ENCODE measurements at regions of chr6 and their contacts with region 1.

Region 1: GRCh38 chr6:158290659-158291058 is 21.6 kb upstream of the TULP4 start:
- DNase-seq: peak; percentile 48 to 79
- ATAC-seq: peak; percentile 96 to 99 (median 99)
- H3K4me3 ChIP-seq: peak overlapping the region; percentile 9
- H3K4me3 Mint-ChIP-seq: peak overlapping the region; percentile 97
- H3K27ac ChIP-seq: peak overlapping the region; percentile 83
- H3K27ac Mint-ChIP-seq: peak overlapping the region; percentile 93 to 99
- H3K4me1 ChIP-seq: peaks cover 17% of the 10 kb centered on the region
- H3K4me1 Mint-ChIP-seq: peaks cover 43 to 53% of the 10 kb centered on the region in 2 donors
- H3K27me3 ChIP-seq: no peaks in the 10 kb centered on the region
- H3K27me3 Mint-ChIP-seq: no peaks in the 10 kb centered on the region
- CTCF ChIP-seq: no peak

Region 2: GRCh38 chr6:158231551-158232315 is 58.9 kb before region 1 on chr6:
- intact Hi-C with region 1: loop called (anchors 2 kb)
- DNase-seq: peak; percentile 74 to 84
- ATAC-seq: peak; percentile 76 to 88 (median 86)
- H3K4me3 ChIP-seq: peak overlapping the region; percentile 58
- H3K4me3 Mint-ChIP-seq: peak overlapping the region; percentile 90
- H3K27ac ChIP-seq: peak overlapping the region; percentile 70
- H3K27ac Mint-ChIP-seq: peak overlapping the region; percentile 85 to 87
- H3K4me1 ChIP-seq: peaks cover 13% of the 10 kb centered on the region
- H3K4me1 Mint-ChIP-seq: peaks cover 23 to 30% of the 10 kb centered on the region in 2 donors
- H3K27me3 ChIP-seq: no peaks in the 10 kb centered on the region
- H3K27me3 Mint-ChIP-seq: no peaks in the 10 kb centered on the region
- CTCF ChIP-seq: no peak

Region 3: GRCh38 chr6:158270389-158271127 is 20.1 kb before region 1 on chr6:
- intact Hi-C with region 1: loop called (anchors 2 kb)
- DNase-seq: no peak
- ATAC-seq: no peak
- H3K4me3 ChIP-seq: no peak overlapping the region
- H3K4me3 Mint-ChIP-seq: no peak overlapping the region
- H3K27ac ChIP-seq: peak overlapping the region; percentile 72
- H3K27ac Mint-ChIP-seq: peak overlapping the region; percentile 52 to 78
- H3K4me1 ChIP-seq: peaks cover 16% of the 10 kb centered on the region
- H3K4me1 Mint-ChIP-seq: peaks cover 9 to 30% of the 10 kb centered on the region in 2 donors
- H3K27me3 ChIP-seq: no peaks in the 10 kb centered on the region
- H3K27me3 Mint-ChIP-seq: no peaks in the 10 kb centered on the region
- CTCF ChIP-seq: no peak

Region 4: GRCh38 chr6:158303210-158303731 is 12.6 kb after region 1 on chr6:
- intact Hi-C with region 1: no loop called
- DNase-seq: no peak
- ATAC-seq: no peak
- H3K4me3 ChIP-seq: no peak overlapping the region
- H3K4me3 Mint-ChIP-seq: no peak overlapping the region
- H3K27ac ChIP-seq: no peak overlapping the region
- H3K27ac Mint-ChIP-seq: no peak overlapping the region
- H3K4me1 ChIP-seq: no peaks in the 10 kb centered on the region
- H3K4me1 Mint-ChIP-seq: no peaks in the 10 kb centered on the region
- H3K27me3 ChIP-seq: no peaks in the 10 kb centered on the region
- H3K27me3 Mint-ChIP-seq: no peaks in the 10 kb centered on the region
- CTCF ChIP-seq: no peak

Region 5: DNA sequence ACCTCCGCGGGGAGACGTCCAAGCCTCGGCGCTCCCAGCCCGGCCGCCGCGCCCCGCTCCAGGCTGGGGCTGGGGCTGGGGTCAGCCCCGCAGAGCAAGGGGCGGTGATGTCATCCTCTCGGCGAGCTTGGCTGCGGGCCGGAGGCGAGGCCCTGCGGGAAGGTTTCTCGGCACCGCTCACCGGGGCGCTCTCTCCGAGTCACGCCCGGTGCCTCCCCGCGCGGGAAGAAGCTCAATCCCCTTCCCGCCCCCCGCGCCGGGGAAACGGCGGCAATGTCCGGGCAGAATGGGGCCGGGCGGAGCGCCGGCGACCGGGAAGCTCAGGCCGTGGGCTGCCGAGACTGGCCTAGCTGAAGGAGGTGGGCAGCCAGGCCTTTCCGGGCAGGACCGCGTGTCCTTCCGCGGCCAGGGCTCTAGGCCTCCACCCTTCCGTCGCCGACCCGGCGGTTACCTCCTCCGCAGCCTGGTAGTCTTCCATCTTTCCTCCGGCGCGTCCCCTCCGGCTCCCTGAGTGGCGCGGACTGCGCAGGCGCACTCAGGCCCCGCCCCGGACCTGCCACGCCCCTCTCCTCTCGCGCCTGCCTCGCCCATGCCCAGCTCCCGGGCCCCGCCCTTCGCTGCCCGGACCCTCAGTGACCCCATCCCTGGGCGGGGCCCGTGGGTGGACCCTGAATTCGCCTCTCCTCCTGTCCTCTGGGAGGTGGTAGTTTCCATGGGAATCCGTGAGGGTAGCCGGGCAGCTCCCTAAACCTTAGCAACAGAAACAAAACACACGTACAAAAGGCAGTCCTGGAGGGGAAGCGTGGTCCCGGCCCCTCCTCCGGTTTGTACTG is 353.8 kb after region 1 on chr6 and contains the start of gene DYNLT1:
- intact Hi-C with region 1: loop called (anchors 5 kb)
- DNase-seq: peak; percentile 85 to 92
- ATAC-seq: peak; percentile 69 to 83 (median 78)
- H3K4me3 ChIP-seq: peak within 1 kb of the TSS; percentile 80
- H3K4me3 Mint-ChIP-seq: peak within 1 kb of the TSS; percentile 99
- H3K27ac ChIP-seq: peak within 1 kb of the TSS; percentile 94
- H3K27ac Mint-ChIP-seq: peak within 1 kb of the TSS; percentile 93 to 94
- H3K4me1 ChIP-seq: peaks cover 51% of the 10 kb centered on the region
- H3K4me1 Mint-ChIP-seq: peaks cover 62 to 69% of the 10 kb centered on the region in 2 donors
- H3K27me3 ChIP-seq: no peaks in the 10 kb centered on the region
- H3K27me3 Mint-ChIP-seq: no peaks in the 10 kb centered on the region
- CTCF ChIP-seq: no peak
- total RNA-seq, gene DYNLT1: 85.7 to 106 (median 86.8) TPM